B cell (primary cell): ENCODE measurements at regions of chr2 and their contacts with region 1.

Region 1: DNA sequence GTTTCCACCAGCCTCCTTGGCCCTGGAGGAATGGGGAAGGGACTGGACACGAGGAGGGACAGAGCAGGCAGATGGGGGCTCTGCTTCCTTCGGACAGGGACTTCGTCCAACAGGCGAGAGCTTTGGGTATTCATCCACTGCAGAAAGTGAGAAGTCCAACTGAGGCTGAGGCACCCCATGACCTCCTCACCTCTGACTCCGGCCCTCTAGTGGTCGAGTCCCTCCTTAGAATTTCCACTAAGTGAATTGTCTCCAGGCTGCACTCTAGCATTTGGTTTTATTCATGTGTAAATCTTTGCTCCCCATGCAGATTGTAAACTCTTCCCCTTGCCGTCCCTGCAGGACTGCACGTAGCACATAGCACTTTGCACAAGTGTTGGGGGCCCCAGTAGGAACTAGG is 75.6 kb downstream of the TMEM247 start:
- DNase-seq: peak; percentile 48
- ATAC-seq: no peak
- H3K4me3 ChIP-seq: no peak overlapping the region
- H3K4me3 Mint-ChIP-seq: no peak overlapping the region
- H3K27ac ChIP-seq: peak overlapping the region in 1 of 2 donors; percentile 48
- H3K27ac Mint-ChIP-seq: peak overlapping the region; percentile 75
- H3K4me1 ChIP-seq: peaks cover 69 to 75% of the 10 kb centered on the region in 2 donors
- H3K4me1 Mint-ChIP-seq: peaks cover 90% of the 10 kb centered on the region
- H3K27me3 ChIP-seq: no peaks in the 10 kb centered on the region
- H3K27me3 Mint-ChIP-seq: no peaks in the 10 kb centered on the region
- CTCF ChIP-seq: peak; percentile 52

Region 2: GRCh38 chr2:45964226-45964845 is 590.7 kb before region 1 on chr2:
- CTCF ChIA-PET with region 1: no interaction called
- POLR2A ChIA-PET with region 1: no interaction called
- intact Hi-C with region 1: no loop called
- DNase-seq: no peak
- ATAC-seq: no peak
- H3K4me3 ChIP-seq: no peak overlapping the region
- H3K4me3 Mint-ChIP-seq: peak overlapping the region; percentile 44
- H3K27ac ChIP-seq: no peak overlapping the region
- H3K27ac Mint-ChIP-seq: peak overlapping the region; percentile 29
- H3K4me1 ChIP-seq: peaks cover 13 to 20% of the 10 kb centered on the region in 2 donors
- H3K4me1 Mint-ChIP-seq: peaks cover 64% of the 10 kb centered on the region
- H3K27me3 ChIP-seq: no peaks in the 10 kb centered on the region
- H3K27me3 Mint-ChIP-seq: no peaks in the 10 kb centered on the region
- CTCF ChIP-seq: no peak

Region 3: DNA sequence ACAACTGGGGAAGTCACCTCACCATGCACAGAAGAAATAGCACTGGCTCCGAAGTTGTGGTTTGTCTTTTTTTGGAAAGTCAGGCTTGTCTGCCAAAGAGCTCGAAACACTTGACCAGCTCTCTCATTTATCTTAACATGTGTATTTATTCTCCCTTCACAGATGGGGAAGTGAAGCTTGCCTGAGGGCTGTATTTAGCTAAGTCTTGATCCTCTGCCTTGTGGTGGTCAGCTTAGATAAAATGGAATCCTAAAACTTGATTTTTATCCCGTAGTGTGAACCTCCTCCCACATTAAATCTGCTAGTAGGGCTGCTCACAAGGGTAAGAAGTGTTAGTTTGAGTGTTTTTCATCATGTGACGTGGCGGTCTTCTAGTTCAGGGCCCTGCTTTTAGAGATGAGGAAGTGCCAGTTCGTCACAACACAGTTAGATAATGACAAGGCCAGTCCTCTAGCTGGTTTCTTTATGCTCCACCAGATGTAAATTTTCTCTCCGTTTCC is 14.1 kb after region 1 on chr2:
- CTCF ChIA-PET with region 1: interaction called, 20 read pairs
- POLR2A ChIA-PET with region 1: interaction called, 6 read pairs
- intact Hi-C with region 1: no loop called
- DNase-seq: peak; percentile 88
- ATAC-seq: peak; percentile 85
- H3K4me3 ChIP-seq: peak overlapping the region in 4 of 5 experiments; percentile 2 to 55 (median 16)
- H3K4me3 Mint-ChIP-seq: peak overlapping the region; percentile 86
- H3K27ac ChIP-seq: peak overlapping the region; percentile 95 to 98
- H3K27ac Mint-ChIP-seq: peak overlapping the region; percentile 100
- H3K4me1 ChIP-seq: peaks cover 100% of the 10 kb centered on the region in 2 donors
- H3K4me1 Mint-ChIP-seq: peaks cover 95% of the 10 kb centered on the region
- H3K27me3 ChIP-seq: no peaks in the 10 kb centered on the region
- H3K27me3 Mint-ChIP-seq: no peaks in the 10 kb centered on the region
- CTCF ChIP-seq: no peak